ENCODE measurements at regions of chr14 and their contacts with region 1.

Region 1: DNA sequence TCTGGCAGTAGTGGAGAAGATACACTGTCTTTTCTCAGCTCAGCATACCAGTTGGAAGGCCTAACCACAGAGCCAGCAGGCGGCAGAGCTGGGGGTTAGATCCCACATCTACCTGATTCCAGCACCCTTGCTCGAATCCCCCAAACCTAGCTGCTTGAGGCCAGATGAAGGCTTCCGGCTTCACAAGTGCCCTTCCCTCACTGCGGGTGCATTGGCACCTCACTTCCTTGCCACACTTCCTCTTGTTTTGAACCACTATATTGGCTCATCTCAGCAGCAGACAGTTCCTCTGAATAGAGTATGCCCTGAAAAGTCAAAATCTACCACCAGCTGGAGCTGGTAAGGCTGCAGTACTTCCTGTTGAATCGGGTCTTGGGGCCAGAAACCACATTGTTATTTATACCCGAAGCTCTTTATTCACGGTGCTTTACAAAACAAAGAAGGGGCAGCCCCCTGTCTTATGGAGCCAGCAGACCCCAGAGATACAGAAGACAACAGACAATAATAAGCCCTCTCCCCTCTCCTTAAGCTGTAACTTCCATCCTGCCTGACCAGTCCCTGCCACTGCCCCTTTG is 233.7 kb downstream of the EFCAB11 start:
- DNase-seq: peak; percentile 57 to 93 (median 72)
- ATAC-seq: peak; percentile 93
- H3K4me3 ChIP-seq: peak overlapping the region; percentile 0
- H3K4me3 Mint-ChIP-seq: peak overlapping the region; percentile 65
- H3K27ac ChIP-seq: peak overlapping the region; percentile 85 to 88
- H3K27ac Mint-ChIP-seq: peak overlapping the region; percentile 95
- H3K4me1 ChIP-seq: peaks cover 88% of the 10 kb centered on the region
- H3K4me1 Mint-ChIP-seq: peaks cover 85% of the 10 kb centered on the region
- H3K27me3 ChIP-seq: no peaks in the 10 kb centered on the region
- H3K27me3 Mint-ChIP-seq: no peaks in the 10 kb centered on the region
- CTCF ChIP-seq: no peak

Region 2: GRCh38 chr14:88682495-88683114 is 1038.2 kb before region 1 on chr14:
- CTCF ChIA-PET with region 1: no interaction called
- POLR2A ChIA-PET with region 1: no interaction called
- intact Hi-C with region 1: no loop called
- DNase-seq: no peak
- ATAC-seq: no peak
- H3K4me3 ChIP-seq: no peak overlapping the region
- H3K4me3 Mint-ChIP-seq: no peak overlapping the region
- H3K27ac ChIP-seq: no peak overlapping the region
- H3K27ac Mint-ChIP-seq: no peak overlapping the region
- H3K4me1 ChIP-seq: no peaks in the 10 kb centered on the region
- H3K4me1 Mint-ChIP-seq: no peaks in the 10 kb centered on the region
- H3K27me3 ChIP-seq: no peaks in the 10 kb centered on the region
- H3K27me3 Mint-ChIP-seq: no peaks in the 10 kb centered on the region
- CTCF ChIP-seq: no peak

Region 3: GRCh38 chr14:89416002-89416995 is 304.5 kb before region 1 on chr14:
- CTCF ChIA-PET with region 1: interaction called, 3 read pairs
- POLR2A ChIA-PET with region 1: interaction called, 11 read pairs
- intact Hi-C with region 1: loop called in 1 of 2 experiments (anchors 1 kb)
- DNase-seq: peak; percentile 97 to 100 (median 99)
- ATAC-seq: peak; percentile 73
- H3K4me3 ChIP-seq: peak overlapping the region; percentile 71
- H3K4me3 Mint-ChIP-seq: peak overlapping the region; percentile 96
- H3K27ac ChIP-seq: peak overlapping the region; percentile 51 to 62
- H3K27ac Mint-ChIP-seq: peak overlapping the region; percentile 96
- H3K4me1 ChIP-seq: peaks cover 26% of the 10 kb centered on the region
- H3K4me1 Mint-ChIP-seq: peaks cover 71% of the 10 kb centered on the region
- H3K27me3 ChIP-seq: no peaks in the 10 kb centered on the region
- H3K27me3 Mint-ChIP-seq: no peaks in the 10 kb centered on the region
- CTCF ChIP-seq: no peak

Region 4: DNA sequence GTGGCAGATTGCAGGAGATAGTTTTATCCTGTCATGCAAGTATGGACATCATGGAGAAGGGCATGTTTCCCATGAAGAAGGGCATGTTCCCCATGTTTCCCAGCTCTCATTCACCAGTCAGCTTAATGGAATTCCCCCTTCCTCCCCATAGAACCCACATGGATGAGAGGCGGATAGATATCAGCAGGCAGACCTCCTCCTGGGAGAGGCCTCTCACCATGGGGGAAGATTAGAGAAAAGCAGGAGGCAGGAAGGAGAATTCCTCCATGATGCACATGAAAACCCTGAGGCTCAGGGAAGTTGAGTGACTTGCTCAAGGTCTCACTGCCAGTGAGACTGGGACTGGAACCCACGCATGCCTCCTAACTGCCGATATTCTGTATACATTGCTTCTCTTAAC is 210.9 kb before region 1 on chr14:
- CTCF ChIA-PET with region 1: interaction called, 5 read pairs
- POLR2A ChIA-PET with region 1: interaction called, 11 read pairs
- intact Hi-C with region 1: no loop called
- DNase-seq: no peak
- ATAC-seq: no peak
- H3K4me3 ChIP-seq: no peak overlapping the region
- H3K4me3 Mint-ChIP-seq: peak overlapping the region; percentile 84
- H3K27ac ChIP-seq: peak overlapping the region; percentile 43 to 69
- H3K27ac Mint-ChIP-seq: peak overlapping the region; percentile 91
- H3K4me1 ChIP-seq: peaks cover 36% of the 10 kb centered on the region
- H3K4me1 Mint-ChIP-seq: peaks cover 66% of the 10 kb centered on the region
- H3K27me3 ChIP-seq: no peaks in the 10 kb centered on the region
- H3K27me3 Mint-ChIP-seq: no peaks in the 10 kb centered on the region
- CTCF ChIP-seq: no peak

Region 5: GRCh38 chr14:89618811-89619551 is 101.8 kb before region 1 on chr14:
- CTCF ChIA-PET with region 1: interaction called, 11 read pairs
- POLR2A ChIA-PET with region 1: interaction called, 71 read pairs
- intact Hi-C with region 1: loop called (anchors 2 to 5 kb)
- DNase-seq: peak; percentile 35 to 84 (median 58)
- ATAC-seq: peak; percentile 42
- H3K4me3 ChIP-seq: peak overlapping the region; percentile 76
- H3K4me3 Mint-ChIP-seq: peak overlapping the region; percentile 96
- H3K27ac ChIP-seq: peak overlapping the region; percentile 62 to 86
- H3K27ac Mint-ChIP-seq: peak overlapping the region; percentile 99
- H3K4me1 ChIP-seq: peaks cover 41% of the 10 kb centered on the region
- H3K4me1 Mint-ChIP-seq: peaks cover 70% of the 10 kb centered on the region
- H3K27me3 ChIP-seq: no peaks in the 10 kb centered on the region
- H3K27me3 Mint-ChIP-seq: no peaks in the 10 kb centered on the region
- CTCF ChIP-seq: no peak

Region 6: DNA sequence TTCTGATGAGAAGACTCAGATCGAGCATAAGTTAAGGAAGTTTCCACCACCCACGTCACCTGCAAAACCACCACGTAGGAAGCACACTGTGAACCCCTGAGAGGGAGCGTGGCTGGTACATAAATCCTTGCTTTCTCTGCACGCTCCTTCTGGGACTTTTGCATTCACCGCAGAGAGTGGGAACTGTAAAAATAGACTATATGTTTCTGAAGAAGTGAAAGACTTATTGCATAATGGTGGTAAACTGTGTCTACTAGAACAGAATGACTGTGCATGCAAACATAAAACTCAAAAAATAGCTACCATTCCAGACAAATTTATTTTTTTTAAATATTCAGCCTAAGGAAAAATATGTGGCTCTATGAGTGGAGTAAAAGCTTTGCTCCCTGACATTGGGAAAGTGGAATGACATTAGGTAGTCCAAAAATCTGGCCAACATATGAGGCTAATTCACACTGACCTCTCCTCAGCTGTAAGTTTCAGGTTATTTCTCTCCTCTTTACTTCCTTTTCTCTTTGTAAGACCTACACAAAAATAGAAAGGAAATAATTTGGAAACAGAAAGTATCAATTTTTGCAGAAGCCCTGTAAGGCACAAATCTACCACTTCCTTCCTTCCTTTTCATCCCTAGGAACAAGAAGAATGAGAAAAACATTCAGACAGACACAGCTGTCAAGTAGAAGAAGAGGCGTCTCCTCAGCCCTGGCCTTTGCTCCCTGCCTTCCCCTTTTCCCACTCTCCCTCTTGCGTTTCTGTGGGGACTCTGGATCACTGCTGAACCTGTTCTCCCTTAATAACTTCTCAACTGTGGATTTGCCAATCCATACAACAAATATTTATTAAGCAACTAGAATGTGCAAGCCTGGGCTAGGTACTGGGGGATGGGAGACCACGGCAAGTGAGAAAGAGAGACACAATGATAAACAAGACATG is 39.5 kb before region 1 on chr14:
- CTCF ChIA-PET with region 1: interaction called, 9 read pairs
- POLR2A ChIA-PET with region 1: interaction called, 29 read pairs
- intact Hi-C with region 1: loop called in 1 of 2 experiments (anchors 1 kb)
- DNase-seq: peak in 5 of 14 experiments; percentile 9 to 71 (median 66)
- ATAC-seq: peak; percentile 76
- H3K4me3 ChIP-seq: peak overlapping the region; percentile 26
- H3K4me3 Mint-ChIP-seq: peak overlapping the region; percentile 81
- H3K27ac ChIP-seq: peak overlapping the region; percentile 53 to 62
- H3K27ac Mint-ChIP-seq: peak overlapping the region; percentile 92
- H3K4me1 ChIP-seq: peaks cover 30% of the 10 kb centered on the region
- H3K4me1 Mint-ChIP-seq: peaks cover 47% of the 10 kb centered on the region
- H3K27me3 ChIP-seq: no peaks in the 10 kb centered on the region
- H3K27me3 Mint-ChIP-seq: no peaks in the 10 kb centered on the region
- CTCF ChIP-seq: no peak

Region 7: GRCh38 chr14:89707086-89707485 is 13.7 kb before region 1 on chr14:
- CTCF ChIA-PET with region 1: interaction called, 18 read pairs
- POLR2A ChIA-PET with region 1: interaction called, 35 read pairs
- intact Hi-C with region 1: loop called (anchors 1 to 2 kb)
- DNase-seq: no peak
- ATAC-seq: no peak
- H3K4me3 ChIP-seq: no peak overlapping the region
- H3K4me3 Mint-ChIP-seq: no peak overlapping the region
- H3K27ac ChIP-seq: no peak overlapping the region
- H3K27ac Mint-ChIP-seq: no peak overlapping the region
- H3K4me1 ChIP-seq: peaks cover 13% of the 10 kb centered on the region
- H3K4me1 Mint-ChIP-seq: peaks cover 31% of the 10 kb centered on the region
- H3K27me3 ChIP-seq: no peaks in the 10 kb centered on the region
- H3K27me3 Mint-ChIP-seq: no peaks in the 10 kb centered on the region
- CTCF ChIP-seq: no peak

Region 8: DNA sequence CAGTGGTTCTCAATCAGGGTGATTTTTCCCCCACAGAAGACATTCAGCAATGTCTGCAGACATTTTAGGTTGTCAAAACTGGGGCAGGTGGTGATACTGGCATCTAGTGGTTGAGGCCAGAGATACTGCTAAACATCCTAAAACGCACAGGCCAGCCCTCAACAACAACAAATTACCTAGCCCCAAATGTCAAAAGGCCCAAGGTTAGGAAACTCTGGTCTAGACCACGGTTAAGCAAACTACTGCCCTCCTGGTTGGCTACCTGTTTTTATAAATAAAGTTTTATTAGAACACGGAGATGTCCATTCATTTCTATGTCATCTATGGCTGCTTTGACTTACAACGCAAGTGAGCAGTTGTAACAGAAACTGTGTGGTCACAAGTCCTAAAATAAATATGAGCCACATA is 47.0 kb after region 1 on chr14:
- CTCF ChIA-PET with region 1: interaction called, 4 read pairs
- POLR2A ChIA-PET with region 1: interaction called, 22 read pairs
- intact Hi-C with region 1: loop called (anchors 2 kb)
- DNase-seq: peak; percentile 46 to 86 (median 57)
- ATAC-seq: peak; percentile 96
- H3K4me3 ChIP-seq: no peak overlapping the region
- H3K4me3 Mint-ChIP-seq: peak overlapping the region; percentile 52
- H3K27ac ChIP-seq: no peak overlapping the region
- H3K27ac Mint-ChIP-seq: peak overlapping the region; percentile 52
- H3K4me1 ChIP-seq: peaks cover 21% of the 10 kb centered on the region
- H3K4me1 Mint-ChIP-seq: peaks cover 43% of the 10 kb centered on the region
- H3K27me3 ChIP-seq: no peaks in the 10 kb centered on the region
- H3K27me3 Mint-ChIP-seq: no peaks in the 10 kb centered on the region
- CTCF ChIP-seq: peak; percentile 82

Region 9: GRCh38 chr14:89912667-89913211 is 191.9 kb after region 1 on chr14:
- CTCF ChIA-PET with region 1: no interaction called
- POLR2A ChIA-PET with region 1: no interaction called
- intact Hi-C with region 1: no loop called
- DNase-seq: peak in 3 of 14 experiments; percentile 13 to 61 (median 45)
- ATAC-seq: no peak
- H3K4me3 ChIP-seq: no peak overlapping the region
- H3K4me3 Mint-ChIP-seq: no peak overlapping the region
- H3K27ac ChIP-seq: no peak overlapping the region
- H3K27ac Mint-ChIP-seq: no peak overlapping the region
- H3K4me1 ChIP-seq: no peaks in the 10 kb centered on the region
- H3K4me1 Mint-ChIP-seq: peaks cover 4% of the 10 kb centered on the region
- H3K27me3 ChIP-seq: no peaks in the 10 kb centered on the region
- H3K27me3 Mint-ChIP-seq: peaks cover 13% of the 10 kb centered on the region
- CTCF ChIP-seq: no peak

Region 10: DNA sequence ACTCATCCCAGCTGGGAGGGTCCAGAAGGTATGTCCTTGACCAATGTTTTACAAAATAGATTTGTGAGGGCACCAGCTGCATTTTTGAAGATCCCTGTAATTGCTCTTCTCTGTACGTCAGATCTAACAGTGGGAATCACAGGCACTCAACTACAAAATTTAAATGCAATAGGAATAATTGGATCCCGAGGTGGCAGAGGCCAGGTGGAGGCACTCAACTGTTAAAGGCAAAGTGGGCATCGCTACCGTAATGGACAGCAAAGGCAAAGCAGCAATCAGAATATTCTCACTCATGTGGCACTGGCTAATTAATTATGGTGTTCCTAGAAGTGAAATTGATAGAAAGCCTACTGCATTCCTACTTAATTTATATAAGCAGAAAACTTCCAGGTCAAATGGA is 507.6 kb after region 1 on chr14:
- CTCF ChIA-PET with region 1: no interaction called
- POLR2A ChIA-PET with region 1: no interaction called
- intact Hi-C with region 1: no loop called
- DNase-seq: no peak
- ATAC-seq: no peak
- H3K4me3 ChIP-seq: no peak overlapping the region
- H3K4me3 Mint-ChIP-seq: no peak overlapping the region
- H3K27ac ChIP-seq: no peak overlapping the region
- H3K27ac Mint-ChIP-seq: no peak overlapping the region
- H3K4me1 ChIP-seq: no peaks in the 10 kb centered on the region
- H3K4me1 Mint-ChIP-seq: no peaks in the 10 kb centered on the region
- H3K27me3 ChIP-seq: no peaks in the 10 kb centered on the region
- H3K27me3 Mint-ChIP-seq: peaks cover 15% of the 10 kb centered on the region
- CTCF ChIP-seq: no peak